ENCODE measurements at regions of chr10 and their contacts with region 1.

Region 1: DNA sequence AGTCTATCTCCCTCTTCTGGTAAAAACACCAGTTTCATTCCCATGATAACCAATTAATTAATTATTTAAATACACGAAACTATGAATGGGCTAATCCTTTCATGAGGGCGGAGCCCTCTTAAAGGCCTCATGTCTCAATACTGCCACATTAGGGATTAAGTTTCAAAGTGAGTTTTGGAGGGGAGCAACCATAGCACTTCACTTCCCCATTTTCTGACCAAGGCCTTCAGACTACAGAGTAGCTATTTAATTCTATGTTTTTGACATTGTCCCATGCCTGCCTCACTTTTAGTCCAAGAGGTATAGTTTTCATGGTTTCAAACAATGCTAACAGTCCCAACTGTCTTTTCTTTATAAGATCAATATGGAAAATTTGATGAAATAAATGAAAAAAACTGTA is 618.6 kb downstream of the ZWINT start:
- DNase-seq: no peak
- H3K4me3 ChIP-seq: no peak overlapping the region
- H3K27ac ChIP-seq: no peak overlapping the region
- H3K4me1 ChIP-seq: no peaks in the 10 kb centered on the region
- H3K27me3 ChIP-seq: no peaks in the 10 kb centered on the region
- CTCF ChIP-seq: no peak

Region 2: DNA sequence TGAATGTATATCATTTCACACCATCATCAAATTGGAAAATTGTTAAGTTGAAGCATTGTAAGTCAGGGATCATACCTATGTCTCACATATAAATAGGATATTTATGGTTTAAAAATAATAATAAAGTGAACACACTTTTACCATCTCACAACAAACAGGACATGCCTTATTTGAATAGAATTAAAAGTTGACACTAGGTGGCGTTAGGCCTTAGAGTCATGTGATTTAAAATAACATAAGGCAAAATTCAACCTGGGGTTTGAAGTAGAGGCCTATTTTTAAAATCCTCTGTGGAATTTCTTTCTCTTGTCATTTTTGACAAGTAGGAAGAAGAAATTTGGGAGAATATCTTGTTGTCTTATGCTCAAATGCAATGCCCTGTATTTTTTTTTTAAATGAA is 756.8 kb before region 1 on chr10:
- CTCF ChIA-PET with region 1: no interaction called
- POLR2A ChIA-PET with region 1: no interaction called
- intact Hi-C with region 1: loop called (anchors 5 kb)
- DNase-seq: no peak
- H3K4me3 ChIP-seq: no peak overlapping the region
- H3K27ac ChIP-seq: no peak overlapping the region
- H3K4me1 ChIP-seq: no peaks in the 10 kb centered on the region
- H3K27me3 ChIP-seq: no peaks in the 10 kb centered on the region
- CTCF ChIP-seq: peak; percentile 68

Region 3: GRCh38 chr10:55351431-55351830 is 391.1 kb before region 1 on chr10:
- CTCF ChIA-PET with region 1: no interaction called
- POLR2A ChIA-PET with region 1: no interaction called
- intact Hi-C with region 1: no loop called
- DNase-seq: no peak
- H3K4me3 ChIP-seq: no peak overlapping the region
- H3K27ac ChIP-seq: no peak overlapping the region
- H3K4me1 ChIP-seq: no peaks in the 10 kb centered on the region
- H3K27me3 ChIP-seq: no peaks in the 10 kb centered on the region
- CTCF ChIP-seq: no peak

Measured in PC-9 (cell line).